WTC11 (cell line): ENCODE measurements at regions of chr5 and their contacts with region 1.

Region 1: DNA sequence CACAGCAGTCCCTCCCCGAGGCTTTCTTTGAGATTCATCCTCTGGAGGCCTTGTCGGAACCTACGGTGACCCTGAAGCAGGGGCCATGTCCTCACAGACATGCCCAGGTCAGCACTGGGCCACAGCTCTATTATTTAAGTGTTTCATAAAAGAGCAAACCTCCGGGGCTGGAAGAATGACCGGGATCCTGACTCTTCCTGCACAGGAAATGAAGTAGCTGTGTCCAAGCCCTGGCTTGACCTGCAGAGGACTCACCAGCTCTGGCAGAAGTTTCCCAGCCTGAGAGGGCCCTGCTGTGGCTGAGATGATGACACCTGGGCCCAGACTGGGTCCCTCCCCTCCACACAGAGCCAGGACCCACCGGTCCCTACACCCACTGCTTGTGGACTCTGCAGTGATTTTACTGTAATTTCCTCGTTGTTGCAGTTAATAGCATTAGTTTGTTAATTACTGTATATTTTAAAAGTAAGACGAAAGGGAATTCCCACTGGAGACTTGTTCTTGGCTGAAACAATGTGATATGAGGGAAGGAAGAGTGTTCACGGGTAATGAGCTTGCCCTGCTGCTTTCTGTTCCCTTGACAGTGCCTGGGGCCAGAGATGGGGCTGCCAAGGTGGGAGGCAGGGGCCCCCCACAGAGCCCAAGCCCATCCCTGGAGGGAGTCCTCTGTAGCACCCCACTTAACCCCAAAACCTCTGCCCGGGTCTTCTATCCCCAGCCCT is 72.2 kb downstream of the PCDH1 start:
- DNase-seq: no peak
- ATAC-seq: no peak
- H3K4me3 Mint-ChIP-seq: no peak overlapping the region
- H3K27ac Mint-ChIP-seq: peak overlapping the region; percentile 56; the same call in 1 of the 2 replicates
- H3K4me1 Mint-ChIP-seq: peaks cover 75% of the 10 kb centered on the region
- H3K27me3 Mint-ChIP-seq: peaks cover 3% of the 10 kb centered on the region; the same call in 1 of the 2 replicates
- CTCF ChIP-seq: no peak

Region 2: DNA sequence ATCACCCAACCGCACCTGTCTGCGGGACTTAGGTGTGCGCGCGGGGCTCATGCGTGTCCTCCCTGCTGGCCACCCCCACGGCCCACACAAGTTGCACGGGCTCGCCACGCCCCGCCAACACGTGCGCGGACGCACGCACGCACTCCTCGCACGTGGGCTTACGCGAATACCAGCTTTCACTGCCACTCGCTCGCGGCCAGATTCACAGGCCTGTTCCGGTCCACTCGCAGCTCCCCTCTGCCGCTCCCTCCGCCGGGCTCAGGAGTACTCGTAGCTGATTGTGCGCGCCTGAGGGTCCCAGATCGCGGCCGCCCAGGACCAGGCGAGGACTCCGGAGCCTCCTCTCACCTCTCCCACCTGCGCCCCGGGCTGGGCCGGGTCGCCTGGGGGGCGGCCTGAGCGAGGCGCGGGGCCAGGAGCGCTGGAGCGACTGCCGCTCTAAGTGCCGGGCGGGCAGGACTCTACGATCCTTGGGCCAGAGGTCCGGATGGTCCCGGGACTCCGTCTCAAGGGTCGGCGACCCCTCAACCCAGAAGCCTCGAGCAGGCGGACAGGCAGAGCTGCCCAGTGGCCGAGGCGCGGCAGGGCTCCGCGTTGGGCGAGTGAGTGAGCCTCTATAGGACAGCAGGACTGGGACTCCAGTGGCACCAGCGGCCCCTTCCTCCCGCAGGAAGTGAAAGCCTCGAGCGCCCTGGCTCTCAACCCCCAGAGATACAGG is 313.7 kb before region 1 on chr5:
- CTCF ChIA-PET with region 1: no interaction called
- POLR2A ChIA-PET with region 1: no interaction called
- DNase-seq: peak; percentile 49
- ATAC-seq: peak; percentile 10
- H3K4me3 Mint-ChIP-seq: peak overlapping the region; percentile 66
- H3K27ac Mint-ChIP-seq: no peak overlapping the region
- H3K4me1 Mint-ChIP-seq: peaks cover 57% of the 10 kb centered on the region
- H3K27me3 Mint-ChIP-seq: peaks cover 52% of the 10 kb centered on the region
- CTCF ChIP-seq: no peak

Region 3: GRCh38 chr5:141816598-141817372 is 10.8 kb after region 1 on chr5:
- CTCF ChIA-PET with region 1: interaction called, 171 read pairs
- POLR2A ChIA-PET with region 1: interaction called, 10 read pairs
- DNase-seq: peak; percentile 84
- ATAC-seq: peak; percentile 66
- H3K4me3 Mint-ChIP-seq: peak overlapping the region; percentile 8; the same call in 1 of the 2 replicates
- H3K27ac Mint-ChIP-seq: peak overlapping the region; percentile 96
- H3K4me1 Mint-ChIP-seq: peaks cover 87% of the 10 kb centered on the region
- H3K27me3 Mint-ChIP-seq: peaks cover 2% of the 10 kb centered on the region; the same call in 1 of the 2 replicates
- CTCF ChIP-seq: no peak